Calu3 (cell line): ENCODE measurements at regions of chr9 and their contacts with region 1.

Region 1: GRCh38 chr9:22238809-22239684 is 207.6 kb upstream of the DMRTA1 start:
- DNase-seq: no peak
- H3K4me3 Mint-ChIP-seq: peak overlapping the region; percentile 59
- H3K27ac Mint-ChIP-seq: peak overlapping the region; percentile 84
- H3K4me1 Mint-ChIP-seq: peaks cover 79% of the 10 kb centered on the region
- H3K27me3 Mint-ChIP-seq: no peaks in the 10 kb centered on the region
- CTCF ChIP-seq: no peak

Region 2: GRCh38 chr9:22008736-22009562 is 230.1 kb before region 1 on chr9 and contains the start of gene CDKN2B:
- CTCF ChIA-PET with region 1: interaction called, 18 read pairs
- intact Hi-C with region 1: loop called (anchors 5 kb)
- DNase-seq: peak; percentile 96
- H3K4me3 Mint-ChIP-seq: peak within 1 kb of the TSS; percentile 96
- H3K27ac Mint-ChIP-seq: peak within 1 kb of the TSS; percentile 53
- H3K4me1 Mint-ChIP-seq: peaks cover 16% of the 10 kb centered on the region
- H3K27me3 Mint-ChIP-seq: no peaks in the 10 kb centered on the region
- CTCF ChIP-seq: peak; percentile 91
- total RNA-seq, gene CDKN2B: 30.4 and 35.2 TPM in 2 replicates

Region 3: GRCh38 chr9:22037954-22038690 is 200.9 kb before region 1 on chr9:
- CTCF ChIA-PET with region 1: no interaction called
- intact Hi-C with region 1: loop called (anchors 2 kb)
- DNase-seq: no peak
- H3K4me3 Mint-ChIP-seq: no peak overlapping the region
- H3K27ac Mint-ChIP-seq: no peak overlapping the region
- H3K4me1 Mint-ChIP-seq: peaks cover 26% of the 10 kb centered on the region
- H3K27me3 Mint-ChIP-seq: no peaks in the 10 kb centered on the region
- CTCF ChIP-seq: peak; percentile 32

Region 4: DNA sequence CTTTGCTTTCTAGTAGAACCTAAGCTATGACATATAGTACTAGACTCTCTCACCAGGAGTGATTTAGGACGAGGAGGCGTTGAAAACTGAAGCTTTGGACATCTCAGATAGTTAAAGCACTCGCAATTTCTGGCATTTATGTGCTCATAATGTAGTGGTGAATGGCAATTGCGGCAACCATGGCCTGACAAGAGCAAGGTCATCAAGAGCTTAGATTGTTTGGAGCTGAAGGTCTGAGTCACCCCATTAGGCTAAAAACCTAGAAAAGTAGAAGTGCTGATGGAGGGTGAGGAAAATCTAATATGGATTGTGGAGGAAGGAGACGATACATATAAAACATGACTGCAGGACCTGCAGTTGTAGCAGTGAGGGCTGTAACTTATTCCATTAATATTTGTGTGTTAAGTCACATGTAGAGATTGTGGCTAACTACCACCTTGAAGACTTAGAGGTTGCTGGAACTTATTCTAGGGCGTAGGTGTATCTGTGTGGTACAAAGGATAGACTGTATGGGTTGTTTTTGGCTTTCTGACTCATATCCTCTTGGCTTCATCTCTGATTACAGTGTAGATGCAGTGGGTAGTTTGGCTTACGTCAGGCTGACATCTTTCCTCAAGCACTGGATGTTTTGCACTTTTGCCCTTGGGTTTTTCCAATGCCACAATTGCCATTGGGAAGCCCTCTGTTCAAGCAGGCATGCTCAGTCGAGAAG is 91.1 kb before region 1 on chr9:
- CTCF ChIA-PET with region 1: interaction called, 3 read pairs
- intact Hi-C with region 1: loop called (anchors 5 kb)
- DNase-seq: peak; percentile 41
- H3K4me3 Mint-ChIP-seq: no peak overlapping the region
- H3K27ac Mint-ChIP-seq: peak overlapping the region; percentile 96
- H3K4me1 Mint-ChIP-seq: peaks cover 50% of the 10 kb centered on the region
- H3K27me3 Mint-ChIP-seq: no peaks in the 10 kb centered on the region
- CTCF ChIP-seq: no peak

Region 5: GRCh38 chr9:22211593-22212360 is 27.3 kb before region 1 on chr9:
- CTCF ChIA-PET with region 1: interaction called, 10 read pairs
- intact Hi-C with region 1: no loop called
- DNase-seq: peak; percentile 54
- H3K4me3 Mint-ChIP-seq: no peak overlapping the region
- H3K27ac Mint-ChIP-seq: peak overlapping the region; percentile 90
- H3K4me1 Mint-ChIP-seq: peaks cover 37% of the 10 kb centered on the region
- H3K27me3 Mint-ChIP-seq: no peaks in the 10 kb centered on the region
- CTCF ChIP-seq: no peak